Activated B cell treated with CpG ODN at 0.5 μM for 24 hours (primary cell): ENCODE measurements at regions of chr7 and their contacts with region 1.

Region 1: GRCh38 chr7:139714163-139714901 is 63.5 kb downstream of the HIPK2 start:
- DNase-seq: peak; percentile 42
- ATAC-seq: peak; percentile 98
- H3K4me3 Mint-ChIP-seq: peak overlapping the region; percentile 75
- H3K27ac Mint-ChIP-seq: peak overlapping the region; percentile 82
- H3K4me1 Mint-ChIP-seq: peaks cover 28% of the 10 kb centered on the region
- H3K27me3 Mint-ChIP-seq: no peaks in the 10 kb centered on the region
- CTCF ChIP-seq: no peak

Region 2: GRCh38 chr7:139696552-139696951 is 17.8 kb before region 1 on chr7:
- CTCF ChIA-PET with region 1: no interaction called
- POLR2A ChIA-PET with region 1: no interaction called
- intact Hi-C with region 1: loop called (anchors 2 kb)
- DNase-seq: no peak
- ATAC-seq: peak; percentile 88
- H3K4me3 Mint-ChIP-seq: peak overlapping the region; percentile 17
- H3K27ac Mint-ChIP-seq: peak overlapping the region; percentile 77
- H3K4me1 Mint-ChIP-seq: peaks cover 57% of the 10 kb centered on the region
- H3K27me3 Mint-ChIP-seq: no peaks in the 10 kb centered on the region
- CTCF ChIP-seq: no peak

Region 3: DNA sequence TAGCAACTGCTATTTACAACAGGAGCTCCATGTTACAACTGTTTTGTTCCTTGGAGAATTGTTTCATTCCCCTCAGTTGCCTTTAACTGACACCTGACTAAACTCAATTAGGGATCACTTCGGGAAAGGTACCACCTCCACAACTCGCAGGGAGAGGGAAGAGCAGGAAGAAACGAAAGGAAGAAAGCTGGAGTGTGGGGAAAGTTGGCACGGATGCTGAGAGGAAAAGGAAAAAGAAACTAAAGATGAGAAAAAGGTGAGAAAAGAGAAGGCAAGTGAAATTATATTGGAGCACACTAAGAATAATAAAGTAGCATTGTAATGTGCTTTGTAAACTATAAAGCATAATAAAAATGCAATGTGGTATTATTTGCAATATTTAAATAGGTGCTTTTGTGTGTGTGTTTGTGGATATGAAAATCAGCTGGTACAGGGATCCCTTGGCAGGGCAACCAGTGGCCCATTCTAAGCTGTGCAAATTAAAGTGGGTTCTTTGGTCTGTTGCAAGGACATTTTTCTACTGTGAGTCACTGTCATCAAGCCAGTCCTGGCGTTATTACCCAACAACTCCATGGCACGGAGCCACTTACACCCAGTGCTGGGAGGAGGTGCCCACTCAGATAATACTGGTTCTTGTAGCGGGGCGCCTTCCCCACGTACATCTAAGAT is 17.6 kb after region 1 on chr7:
- CTCF ChIA-PET with region 1: no interaction called
- POLR2A ChIA-PET with region 1: no interaction called
- intact Hi-C with region 1: loop called (anchors 2 kb)
- DNase-seq: no peak
- ATAC-seq: no peak
- H3K4me3 Mint-ChIP-seq: no peak overlapping the region
- H3K27ac Mint-ChIP-seq: peak overlapping the region; percentile 20
- H3K4me1 Mint-ChIP-seq: peaks cover 51% of the 10 kb centered on the region
- H3K27me3 Mint-ChIP-seq: no peaks in the 10 kb centered on the region
- CTCF ChIP-seq: no peak